Heart left ventricle (tissue), 16 donors: ENCODE measurements at regions of chr2 and their contacts with region 1.

Region 1: DNA sequence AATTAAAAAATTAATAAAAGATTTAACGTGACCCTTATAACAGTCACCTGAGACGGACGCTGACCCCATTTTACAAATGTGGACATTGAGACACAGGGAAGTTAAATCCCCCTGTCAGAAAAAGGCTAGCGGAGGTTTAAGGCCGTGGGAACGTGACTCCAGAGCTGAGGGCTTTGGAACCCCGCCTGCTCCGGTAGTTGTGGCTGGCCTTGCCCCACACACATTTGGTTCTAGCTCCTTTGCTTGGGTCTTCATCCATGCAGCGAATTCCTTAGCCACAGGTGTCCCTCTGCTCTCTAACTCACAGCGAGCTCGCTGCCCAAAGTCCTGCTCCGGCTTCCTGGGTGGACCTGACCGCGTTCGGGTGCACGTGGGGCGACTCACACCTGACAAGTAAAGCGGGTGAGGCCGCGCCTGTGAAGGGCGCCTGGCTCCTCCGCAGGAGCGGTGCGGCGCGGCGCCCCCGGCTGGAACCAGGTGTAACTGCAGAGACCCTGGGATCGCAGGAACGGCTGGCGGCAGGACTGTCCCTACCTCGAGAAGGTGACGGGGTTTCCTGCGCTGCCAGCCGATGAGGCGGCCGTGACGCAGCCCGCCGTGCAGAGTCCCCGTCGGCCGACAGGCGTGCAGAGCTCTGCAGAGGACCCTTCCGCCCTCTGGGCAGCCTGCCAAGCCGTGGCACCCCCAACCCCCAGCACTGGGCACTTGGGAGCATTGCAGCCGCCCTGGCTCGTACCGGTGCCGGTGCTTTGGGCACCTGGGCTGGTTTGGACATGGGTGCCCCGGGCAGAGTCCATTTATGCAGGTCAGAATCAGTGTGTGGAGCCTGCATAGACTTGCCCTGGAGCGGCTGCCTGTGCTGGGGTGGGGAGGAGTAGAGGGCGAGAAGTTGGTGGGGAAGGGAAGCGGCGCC is 2.4 kb upstream of the PROC start:
- DNase-seq: peak; percentile 53 to 79 (median 60)
- ATAC-seq: peak; percentile 39 to 78 (median 74)
- H3K4me3 ChIP-seq: peak overlapping the region; percentile 19 to 61 (median 48)
- H3K27ac ChIP-seq: no peak overlapping the region
- H3K4me1 ChIP-seq: peaks cover 3 to 50% (median 17%) of the 10 kb centered on the region in 12 donors
- H3K27me3 ChIP-seq: peaks cover 0 to 14% (median 0%) of the 10 kb centered on the region in 9 donors
- CTCF ChIP-seq: peak; percentile 38 to 70 (median 58)
- POLR2A ChIP-seq: no peak

Region 2: DNA sequence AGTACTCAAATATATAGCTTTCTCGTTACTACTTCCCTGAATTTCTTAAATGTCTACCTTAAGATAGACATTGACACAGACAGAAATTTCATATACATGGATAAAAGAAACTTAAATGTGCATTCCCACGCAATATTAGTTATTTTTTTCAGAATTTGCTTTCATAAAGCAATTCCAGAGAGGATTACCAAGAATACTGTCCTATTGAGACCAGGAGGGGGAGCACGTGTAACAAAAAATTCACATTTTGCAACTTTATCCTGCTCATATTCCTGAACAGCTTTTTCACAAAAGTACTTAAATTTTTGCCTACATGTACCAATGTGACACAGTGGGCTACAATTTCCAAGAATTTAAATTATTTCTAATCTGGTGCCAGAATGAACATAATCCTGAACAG is 91.2 kb before region 1 on chr2:
- intact Hi-C with region 1: loop called in 2 of 10 experiments (anchors 5 to 10 kb)
- DNase-seq: no peak
- ATAC-seq: peak in 1 of 4 donors; percentile 47
- H3K4me3 ChIP-seq: no peak overlapping the region
- H3K27ac ChIP-seq: no peak overlapping the region
- H3K4me1 ChIP-seq: no peaks in the 10 kb centered on the region
- H3K27me3 ChIP-seq: no peaks in the 10 kb centered on the region
- CTCF ChIP-seq: peak; percentile 28 to 69 (median 58)
- POLR2A ChIP-seq: no peak

Region 3: DNA sequence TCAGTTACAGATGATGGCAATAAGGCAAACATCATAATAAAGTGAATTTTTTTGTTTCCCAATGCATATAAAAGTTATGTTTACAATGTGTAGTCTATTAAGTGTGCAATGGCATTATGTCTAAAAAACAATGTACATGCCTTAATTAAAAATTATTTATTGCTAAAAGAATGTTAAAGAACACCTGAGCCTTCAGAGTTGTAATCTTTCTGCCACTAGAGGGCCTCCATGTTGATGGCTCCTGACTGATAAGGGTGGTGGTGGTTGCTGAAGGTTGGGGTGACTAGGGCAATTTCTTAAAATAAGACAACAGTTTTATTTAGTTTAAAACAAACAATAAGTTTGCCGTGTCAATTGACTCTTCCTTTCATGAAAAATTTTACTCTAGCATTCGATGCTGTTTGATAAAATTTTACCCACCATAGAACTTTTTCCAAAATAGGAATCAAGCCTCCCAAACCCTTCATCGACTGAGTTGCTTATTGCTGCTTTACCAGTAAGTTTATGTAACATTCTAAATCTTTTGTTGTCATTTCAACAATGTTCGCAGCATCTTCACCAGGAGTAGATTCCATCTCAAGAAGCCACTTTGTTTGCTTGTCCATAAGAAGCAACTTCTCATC is 60.4 kb before region 1 on chr2:
- intact Hi-C with region 1: loop called in 3 of 10 experiments (anchors 5 to 10 kb)
- DNase-seq: no peak
- ATAC-seq: no peak
- H3K4me3 ChIP-seq: no peak overlapping the region
- H3K27ac ChIP-seq: no peak overlapping the region
- H3K4me1 ChIP-seq: peaks cover 0 to 44% (median 21%) of the 10 kb centered on the region in 12 donors
- H3K27me3 ChIP-seq: no peaks in the 10 kb centered on the region
- CTCF ChIP-seq: peak in 11 of 12 donors; percentile 16 to 56 (median 42)
- POLR2A ChIP-seq: no peak

Region 4: GRCh38 chr2:127471286-127471988 is 55.6 kb after region 1 on chr2:
- intact Hi-C with region 1: loop called in 2 of 10 experiments (anchors 5 to 10 kb)
- DNase-seq: no peak
- ATAC-seq: no peak
- H3K4me3 ChIP-seq: no peak overlapping the region
- H3K27ac ChIP-seq: no peak overlapping the region
- H3K4me1 ChIP-seq: no peaks in the 10 kb centered on the region
- H3K27me3 ChIP-seq: no peaks in the 10 kb centered on the region
- CTCF ChIP-seq: no peak
- POLR2A ChIP-seq: no peak

Region 5: GRCh38 chr2:127479219-127479825 is 63.5 kb after region 1 on chr2:
- intact Hi-C with region 1: loop called in 2 of 10 experiments (anchors 5 to 10 kb)
- DNase-seq: no peak
- ATAC-seq: peak in 3 of 4 donors; percentile 34 to 74 (median 55)
- H3K4me3 ChIP-seq: no peak overlapping the region
- H3K27ac ChIP-seq: no peak overlapping the region
- H3K4me1 ChIP-seq: no peaks in the 10 kb centered on the region
- H3K27me3 ChIP-seq: no peaks in the 10 kb centered on the region
- CTCF ChIP-seq: peak; percentile 35 to 73 (median 62)
- POLR2A ChIP-seq: no peak